ENCODE measurements at regions of chr19 and their contacts with region 1.

Region 1: GRCh38 chr19:14459703-14460102 is 15.5 kb downstream of the PTGER1 start:
- DNase-seq: peak; percentile 74 to 75
- ATAC-seq: peak; percentile 97 to 99 (median 99)
- H3K4me3 ChIP-seq: no peak overlapping the region
- H3K4me3 Mint-ChIP-seq: peak overlapping the region; percentile 82
- H3K27ac ChIP-seq: peak overlapping the region; percentile 76
- H3K27ac Mint-ChIP-seq: peak overlapping the region; percentile 64 to 72
- H3K4me1 ChIP-seq: peaks cover 28% of the 10 kb centered on the region
- H3K4me1 Mint-ChIP-seq: peaks cover 31 to 34% of the 10 kb centered on the region in 2 donors
- H3K27me3 ChIP-seq: no peaks in the 10 kb centered on the region
- H3K27me3 Mint-ChIP-seq: no peaks in the 10 kb centered on the region
- CTCF ChIP-seq: no peak

Region 2: DNA sequence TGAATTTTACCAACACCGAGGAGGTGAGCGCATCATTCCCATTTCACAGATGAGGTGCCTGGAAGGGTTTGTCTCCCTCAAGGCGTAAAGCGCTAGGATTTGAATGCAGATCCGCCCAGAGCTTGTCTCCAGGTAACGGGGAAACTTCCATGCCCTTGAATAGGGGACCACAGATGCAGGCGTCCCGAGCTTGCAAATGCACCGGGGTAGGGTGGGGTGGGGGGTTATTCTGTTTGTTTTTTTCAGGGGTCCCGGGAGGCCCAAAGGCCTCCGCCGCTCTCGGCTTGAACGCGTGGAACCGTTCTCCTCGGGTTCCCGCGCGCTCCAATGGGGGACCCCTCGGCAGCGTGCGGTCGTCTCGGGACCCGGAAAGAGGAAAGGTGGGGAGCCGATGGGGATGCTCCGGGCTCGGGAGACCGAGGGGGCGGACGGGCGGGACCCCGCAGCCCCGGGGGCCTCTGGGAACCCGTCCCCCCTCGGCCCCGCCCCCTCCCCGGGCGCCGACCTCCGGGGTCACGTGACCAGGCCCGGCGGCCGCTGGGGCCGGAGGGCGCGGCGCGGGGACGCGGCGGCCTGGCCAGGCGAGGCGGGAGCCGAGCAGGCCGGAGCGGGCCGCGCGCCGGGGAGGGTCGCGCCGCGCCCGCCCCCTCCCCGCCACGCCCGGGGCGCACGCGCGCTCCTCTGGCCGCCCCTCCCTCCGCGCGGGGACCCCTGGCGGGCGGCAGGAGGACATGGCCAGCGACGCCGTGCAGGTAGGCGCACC is 26.7 kb before region 1 on chr19 and contains the start of gene PKN1:
- intact Hi-C with region 1: loop called (anchors 1 kb)
- DNase-seq: peak; percentile 56 to 68
- ATAC-seq: peak in 2 of 3 donors; percentile 6 to 31
- H3K4me3 ChIP-seq: peak within 1 kb of the TSS; percentile 72
- H3K4me3 Mint-ChIP-seq: peak within 1 kb of the TSS; percentile 90
- H3K27ac ChIP-seq: peak within 1 kb of the TSS; percentile 79
- H3K27ac Mint-ChIP-seq: peak within 1 kb of the TSS; percentile 97 to 100
- H3K4me1 ChIP-seq: peaks cover 48% of the 10 kb centered on the region
- H3K4me1 Mint-ChIP-seq: peaks cover 25 to 38% of the 10 kb centered on the region in 2 donors
- H3K27me3 ChIP-seq: no peaks in the 10 kb centered on the region
- H3K27me3 Mint-ChIP-seq: no peaks in the 10 kb centered on the region
- CTCF ChIP-seq: no peak
- total RNA-seq, gene PKN1: 323 to 351 (median 350) TPM

Region 3: DNA sequence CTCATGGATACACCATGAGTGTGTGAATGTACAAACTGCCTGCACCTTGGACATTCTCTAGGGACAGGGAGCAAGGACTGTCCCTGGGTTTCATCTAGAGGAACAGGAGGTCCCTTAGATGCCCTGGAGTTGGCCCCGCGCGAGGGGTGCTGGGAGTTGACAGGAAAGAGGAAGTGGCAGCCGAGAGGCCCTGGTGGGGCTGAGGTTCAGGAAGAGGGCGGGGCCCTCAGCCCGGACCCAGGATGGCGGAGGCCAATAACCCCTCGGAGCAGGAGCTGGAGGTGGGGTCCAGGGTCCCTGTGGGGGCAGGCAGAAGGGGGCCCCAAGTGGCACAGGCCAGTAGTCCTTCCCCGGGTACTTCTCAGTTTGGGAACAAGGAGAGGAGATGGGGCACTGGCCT is 19.7 kb before region 1 on chr19:
- intact Hi-C with region 1: loop called (anchors 1 kb)
- DNase-seq: peak; percentile 72 to 83
- ATAC-seq: peak; percentile 63 to 81 (median 72)
- H3K4me3 ChIP-seq: peak overlapping the region; percentile 51
- H3K4me3 Mint-ChIP-seq: peak overlapping the region; percentile 98
- H3K27ac ChIP-seq: peak overlapping the region; percentile 66
- H3K27ac Mint-ChIP-seq: peak overlapping the region; percentile 97 to 100
- H3K4me1 ChIP-seq: peaks cover 66% of the 10 kb centered on the region
- H3K4me1 Mint-ChIP-seq: peaks cover 39 to 57% of the 10 kb centered on the region in 2 donors
- H3K27me3 ChIP-seq: no peaks in the 10 kb centered on the region
- H3K27me3 Mint-ChIP-seq: no peaks in the 10 kb centered on the region
- CTCF ChIP-seq: no peak

Region 4: GRCh38 chr19:14761612-14762011 is 301.9 kb after region 1 on chr19:
- intact Hi-C with region 1: no loop called
- DNase-seq: no peak
- ATAC-seq: no peak
- H3K4me3 ChIP-seq: no peak overlapping the region
- H3K4me3 Mint-ChIP-seq: no peak overlapping the region
- H3K27ac ChIP-seq: no peak overlapping the region
- H3K27ac Mint-ChIP-seq: no peak overlapping the region
- H3K4me1 ChIP-seq: no peaks in the 10 kb centered on the region
- H3K4me1 Mint-ChIP-seq: no peaks in the 10 kb centered on the region
- H3K27me3 ChIP-seq: no peaks in the 10 kb centered on the region
- H3K27me3 Mint-ChIP-seq: peaks cover 0 to 7% of the 10 kb centered on the region in 2 donors
- CTCF ChIP-seq: no peak

Measured in natural killer cell (primary cell).